ENCODE measurements at regions of chr1 and their contacts with region 1.

Region 1: DNA sequence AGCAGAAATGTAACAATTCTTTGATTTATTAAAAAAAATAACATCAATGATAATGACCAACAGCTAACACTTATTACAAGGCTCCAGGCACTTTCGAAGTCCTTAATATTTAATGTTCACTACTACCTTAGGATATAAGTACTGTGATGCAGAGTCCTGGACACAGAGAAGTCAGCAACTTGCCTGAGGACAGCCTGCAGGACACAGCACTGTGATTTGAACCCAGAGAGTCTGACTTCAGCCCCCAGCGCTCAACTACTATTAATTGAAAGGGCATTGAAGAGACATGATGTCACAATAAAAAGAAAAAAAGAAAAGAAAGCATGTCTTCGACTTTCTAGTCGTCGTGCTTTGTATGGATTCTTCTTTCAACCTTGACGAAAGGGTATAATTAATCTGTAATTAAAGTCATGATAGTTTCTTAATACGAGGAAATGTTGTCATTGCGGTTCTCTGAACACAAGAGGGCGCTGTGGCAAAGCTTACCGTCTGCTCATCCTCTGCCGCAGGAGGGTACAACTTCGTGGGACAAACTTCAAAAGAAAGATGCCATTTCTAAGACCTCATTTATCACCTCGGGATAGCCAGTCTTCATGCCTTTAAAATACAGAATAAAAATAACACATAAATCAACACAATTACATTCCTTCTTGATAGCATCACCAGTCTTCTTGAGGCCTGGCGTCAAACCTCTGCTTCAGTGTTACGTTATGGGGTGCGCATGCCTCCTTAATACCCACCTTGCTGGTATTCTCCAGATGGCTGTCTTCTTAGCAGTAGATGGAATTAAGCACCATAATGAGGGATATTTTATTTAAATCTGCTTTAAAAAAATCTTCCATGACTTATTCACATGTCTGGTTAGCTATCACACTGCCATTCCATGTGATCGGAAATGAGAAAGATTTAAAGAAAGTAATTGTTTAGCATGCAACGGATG is 240.1 kb downstream of the DISC1 start:
- DNase-seq: peak; percentile 89
- H3K4me3 Mint-ChIP-seq: no peak overlapping the region
- H3K27ac Mint-ChIP-seq: peak overlapping the region; percentile 60
- H3K4me1 Mint-ChIP-seq: peaks cover 20% of the 10 kb centered on the region
- H3K27me3 Mint-ChIP-seq: no peaks in the 10 kb centered on the region
- CTCF ChIP-seq: peak; percentile 100

Region 2: GRCh38 chr1:231663211-231663792 is 203.4 kb before region 1 on chr1:
- CTCF ChIA-PET with region 1: no interaction called
- POLR2A ChIA-PET with region 1: no interaction called
- intact Hi-C with region 1: no loop called
- DNase-seq: peak; percentile 58
- H3K4me3 Mint-ChIP-seq: no peak overlapping the region
- H3K27ac Mint-ChIP-seq: no peak overlapping the region
- H3K4me1 Mint-ChIP-seq: peaks cover 10% of the 10 kb centered on the region
- H3K27me3 Mint-ChIP-seq: peaks cover 15% of the 10 kb centered on the region
- CTCF ChIP-seq: no peak

Region 3: GRCh38 chr1:231806623-231807495 is 59.8 kb before region 1 on chr1:
- CTCF ChIA-PET with region 1: interaction called, 10 read pairs
- POLR2A ChIA-PET with region 1: interaction called, 3 read pairs
- intact Hi-C with region 1: no loop called
- DNase-seq: peak; percentile 92
- H3K4me3 Mint-ChIP-seq: no peak overlapping the region
- H3K27ac Mint-ChIP-seq: peak overlapping the region; percentile 65
- H3K4me1 Mint-ChIP-seq: peaks cover 31% of the 10 kb centered on the region
- H3K27me3 Mint-ChIP-seq: no peaks in the 10 kb centered on the region
- CTCF ChIP-seq: peak; percentile 64

Region 4: GRCh38 chr1:231883382-231883781 is 16.7 kb after region 1 on chr1:
- CTCF ChIA-PET with region 1: interaction called, 11 read pairs
- POLR2A ChIA-PET with region 1: interaction called, 3 read pairs
- intact Hi-C with region 1: no loop called
- DNase-seq: peak; percentile 52
- H3K4me3 Mint-ChIP-seq: no peak overlapping the region
- H3K27ac Mint-ChIP-seq: no peak overlapping the region
- H3K4me1 Mint-ChIP-seq: no peaks in the 10 kb centered on the region
- H3K27me3 Mint-ChIP-seq: no peaks in the 10 kb centered on the region
- CTCF ChIP-seq: peak; percentile 15

Region 5: GRCh38 chr1:232174306-232174705 is 307.6 kb after region 1 on chr1:
- CTCF ChIA-PET with region 1: interaction called, 6 read pairs
- POLR2A ChIA-PET with region 1: interaction called, 3 read pairs
- intact Hi-C with region 1: loop called (anchors 5 kb)
- DNase-seq: no peak
- H3K4me3 Mint-ChIP-seq: no peak overlapping the region
- H3K27ac Mint-ChIP-seq: no peak overlapping the region
- H3K4me1 Mint-ChIP-seq: no peaks in the 10 kb centered on the region
- H3K27me3 Mint-ChIP-seq: no peaks in the 10 kb centered on the region
- CTCF ChIP-seq: no peak

Region 6: GRCh38 chr1:232416026-232416568 is 549.4 kb after region 1 on chr1:
- CTCF ChIA-PET with region 1: interaction called, 4 read pairs
- POLR2A ChIA-PET with region 1: no interaction called
- intact Hi-C with region 1: loop called (anchors 2 kb)
- DNase-seq: peak; percentile 40
- H3K4me3 Mint-ChIP-seq: no peak overlapping the region
- H3K27ac Mint-ChIP-seq: peak overlapping the region; percentile 57
- H3K4me1 Mint-ChIP-seq: peaks cover 21% of the 10 kb centered on the region
- H3K27me3 Mint-ChIP-seq: no peaks in the 10 kb centered on the region
- CTCF ChIP-seq: no peak

Region 7: DNA sequence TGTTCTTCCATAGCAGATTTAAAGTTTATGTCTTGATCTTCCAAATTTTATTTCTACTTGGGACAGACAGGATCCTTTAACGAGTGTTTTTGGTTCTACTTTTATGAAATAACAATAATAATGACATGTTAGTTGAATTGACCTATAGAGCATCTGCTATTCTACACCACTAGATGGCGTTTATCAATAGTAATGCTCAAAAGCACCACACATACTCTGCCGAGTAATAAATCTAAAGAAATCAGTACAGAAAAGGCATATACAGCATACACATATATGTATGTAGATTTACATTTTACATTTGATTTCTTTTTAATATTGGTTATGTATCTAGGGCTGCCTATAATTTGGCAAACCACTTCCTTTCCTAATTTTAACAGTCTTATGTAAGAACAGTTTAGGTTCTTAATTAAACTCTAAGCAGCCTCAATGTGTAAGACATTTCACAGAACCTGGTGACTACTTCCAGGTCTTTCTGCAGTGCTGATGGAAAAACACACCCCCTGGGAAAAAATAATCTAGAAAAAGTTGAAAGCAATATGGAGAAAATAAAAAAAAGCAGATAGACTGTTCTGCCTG is 769.2 kb after region 1 on chr1:
- CTCF ChIA-PET with region 1: interaction called, 14 read pairs
- POLR2A ChIA-PET with region 1: interaction called, 15 read pairs
- intact Hi-C with region 1: no loop called
- DNase-seq: peak; percentile 81
- H3K4me3 Mint-ChIP-seq: no peak overlapping the region
- H3K27ac Mint-ChIP-seq: no peak overlapping the region
- H3K4me1 Mint-ChIP-seq: peaks cover 6% of the 10 kb centered on the region
- H3K27me3 Mint-ChIP-seq: no peaks in the 10 kb centered on the region
- CTCF ChIP-seq: peak; percentile 76

Measured in MCF 10A (cell line).